Activated B cell treated with CpG ODN at 0.5 μM for 24 hours (primary cell): ENCODE measurements at regions of chr2 and their contacts with region 1.

Region 1: DNA sequence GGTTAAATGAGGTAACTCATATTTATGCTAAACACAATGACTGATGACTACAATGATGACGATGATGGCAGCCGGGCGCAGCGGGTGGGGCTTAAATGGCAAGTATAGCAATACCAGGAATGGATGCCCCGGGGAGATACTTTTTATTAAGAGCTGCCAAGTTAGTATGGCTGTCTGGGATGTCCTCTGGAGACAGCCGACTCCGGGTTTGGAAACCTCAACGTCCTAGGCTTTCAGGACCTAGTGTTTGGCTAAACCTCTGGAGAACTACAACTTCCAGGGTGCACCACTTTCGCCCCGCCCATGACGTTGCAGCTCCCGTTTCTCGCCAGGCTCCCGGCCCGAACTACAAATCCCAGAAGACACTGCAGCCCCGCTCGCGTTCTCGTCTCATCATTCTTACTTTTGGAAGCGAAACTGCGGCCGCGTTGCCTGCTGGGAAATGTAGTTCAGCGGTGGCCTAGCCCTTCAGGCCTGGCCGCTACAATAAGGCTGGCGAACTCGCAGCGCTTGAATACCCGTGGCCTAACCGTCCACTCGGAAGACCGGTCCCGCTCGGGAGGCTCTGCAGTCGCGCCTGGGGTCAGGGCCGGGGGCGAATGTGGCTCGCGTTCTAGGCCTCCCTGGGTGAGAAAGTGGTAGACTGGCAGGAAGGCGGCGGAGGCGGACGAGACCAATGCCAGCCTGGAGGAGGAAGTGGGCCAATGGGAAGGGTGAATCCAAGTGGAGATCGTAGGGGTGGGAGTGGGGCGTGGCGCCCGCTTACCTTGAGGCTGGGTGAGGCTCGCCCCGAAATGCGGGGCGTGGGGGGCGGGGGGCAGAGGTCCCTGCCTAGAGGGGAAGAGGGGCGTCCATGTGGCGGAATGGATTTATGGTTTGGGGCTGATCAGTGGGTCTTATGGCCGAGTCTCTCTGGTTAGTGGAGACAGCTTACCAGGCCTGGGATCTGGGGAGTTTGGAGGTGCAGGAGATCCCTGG is at the start of gene SMARCAL1:
- DNase-seq: peak; percentile 96
- ATAC-seq: peak; percentile 93
- H3K4me3 Mint-ChIP-seq: peak within 1 kb of the TSS; percentile 97
- H3K27ac Mint-ChIP-seq: peak within 1 kb of the TSS; percentile 97
- H3K4me1 Mint-ChIP-seq: peaks cover 31% of the 10 kb centered on the region
- H3K27me3 Mint-ChIP-seq: peaks cover 9% of the 10 kb centered on the region
- CTCF ChIP-seq: no peak
- total RNA-seq, gene SMARCAL1: 31.5 and 34.3 TPM in 2 replicates

Region 2: GRCh38 chr2:215311625-215312396 is 1100.5 kb before region 1 on chr2 and contains the start of gene ATIC:
- CTCF ChIA-PET with region 1: no interaction called
- POLR2A ChIA-PET with region 1: no interaction called
- intact Hi-C with region 1: loop called (anchors 2 kb)
- DNase-seq: peak; percentile 86
- ATAC-seq: peak; percentile 96
- H3K4me3 Mint-ChIP-seq: peak within 1 kb of the TSS; percentile 95
- H3K27ac Mint-ChIP-seq: peak within 1 kb of the TSS; percentile 91
- H3K4me1 Mint-ChIP-seq: peaks cover 35% of the 10 kb centered on the region
- H3K27me3 Mint-ChIP-seq: no peaks in the 10 kb centered on the region
- CTCF ChIP-seq: no peak
- total RNA-seq, gene ATIC: 161 and 179 TPM in 2 replicates

Region 3: GRCh38 chr2:216057688-216058193 is 354.6 kb before region 1 on chr2:
- CTCF ChIA-PET with region 1: no interaction called
- POLR2A ChIA-PET with region 1: no interaction called
- intact Hi-C with region 1: loop called (anchors 5 kb)
- DNase-seq: peak; percentile 25
- ATAC-seq: peak; percentile 83
- H3K4me3 Mint-ChIP-seq: peak overlapping the region; percentile 84
- H3K27ac Mint-ChIP-seq: peak overlapping the region; percentile 96
- H3K4me1 Mint-ChIP-seq: peaks cover 29% of the 10 kb centered on the region
- H3K27me3 Mint-ChIP-seq: no peaks in the 10 kb centered on the region
- CTCF ChIP-seq: no peak

Region 4: GRCh38 chr2:216114714-216115557 is 297.4 kb before region 1 on chr2:
- CTCF ChIA-PET with region 1: no interaction called
- POLR2A ChIA-PET with region 1: interaction called, 14 read pairs
- intact Hi-C with region 1: loop called (anchors 1 kb)
- DNase-seq: peak; percentile 85
- ATAC-seq: peak; percentile 91
- H3K4me3 Mint-ChIP-seq: peak overlapping the region; percentile 94
- H3K27ac Mint-ChIP-seq: peak overlapping the region; percentile 97
- H3K4me1 Mint-ChIP-seq: peaks cover 78% of the 10 kb centered on the region
- H3K27me3 Mint-ChIP-seq: no peaks in the 10 kb centered on the region
- CTCF ChIP-seq: no peak

Region 5: GRCh38 chr2:216491793-216492596 is 79.7 kb after region 1 on chr2:
- CTCF ChIA-PET with region 1: no interaction called
- POLR2A ChIA-PET with region 1: interaction called, 15 read pairs
- intact Hi-C with region 1: loop called (anchors 1 kb)
- DNase-seq: peak; percentile 48
- ATAC-seq: peak; percentile 93
- H3K4me3 Mint-ChIP-seq: peak overlapping the region; percentile 56
- H3K27ac Mint-ChIP-seq: peak overlapping the region; percentile 91
- H3K4me1 Mint-ChIP-seq: peaks cover 46% of the 10 kb centered on the region
- H3K27me3 Mint-ChIP-seq: no peaks in the 10 kb centered on the region
- CTCF ChIP-seq: no peak

Region 6: DNA sequence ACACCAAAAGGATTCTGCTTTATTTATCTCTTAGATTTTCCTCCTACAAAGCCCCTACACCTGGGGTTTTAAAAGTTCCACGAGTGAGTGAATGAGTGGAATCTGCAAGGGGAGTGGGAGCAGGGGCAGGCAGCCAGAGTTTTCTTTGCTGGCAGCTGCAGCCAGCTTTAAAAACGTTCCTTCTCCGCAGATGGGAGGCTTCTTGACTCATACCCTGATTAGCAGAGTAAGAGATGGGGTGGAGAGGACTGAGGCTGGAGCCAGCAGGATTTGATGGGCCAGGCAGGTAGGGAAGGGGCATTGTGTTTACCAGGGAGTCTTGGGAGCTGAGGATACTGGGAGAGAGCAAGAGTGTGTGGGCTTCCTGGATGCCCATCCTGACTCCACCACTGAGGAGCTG is 547.1 kb after region 1 on chr2:
- CTCF ChIA-PET with region 1: no interaction called
- POLR2A ChIA-PET with region 1: interaction called, 10 read pairs
- intact Hi-C with region 1: no loop called
- DNase-seq: no peak
- ATAC-seq: no peak
- H3K4me3 Mint-ChIP-seq: no peak overlapping the region
- H3K27ac Mint-ChIP-seq: no peak overlapping the region
- H3K4me1 Mint-ChIP-seq: no peaks in the 10 kb centered on the region
- H3K27me3 Mint-ChIP-seq: peaks cover 5% of the 10 kb centered on the region
- CTCF ChIP-seq: no peak